Naive thymus-derived CD4-positive, alpha-beta T cell (primary cell): ENCODE measurements at regions of chr4 and their contacts with region 1.

Region 1: DNA sequence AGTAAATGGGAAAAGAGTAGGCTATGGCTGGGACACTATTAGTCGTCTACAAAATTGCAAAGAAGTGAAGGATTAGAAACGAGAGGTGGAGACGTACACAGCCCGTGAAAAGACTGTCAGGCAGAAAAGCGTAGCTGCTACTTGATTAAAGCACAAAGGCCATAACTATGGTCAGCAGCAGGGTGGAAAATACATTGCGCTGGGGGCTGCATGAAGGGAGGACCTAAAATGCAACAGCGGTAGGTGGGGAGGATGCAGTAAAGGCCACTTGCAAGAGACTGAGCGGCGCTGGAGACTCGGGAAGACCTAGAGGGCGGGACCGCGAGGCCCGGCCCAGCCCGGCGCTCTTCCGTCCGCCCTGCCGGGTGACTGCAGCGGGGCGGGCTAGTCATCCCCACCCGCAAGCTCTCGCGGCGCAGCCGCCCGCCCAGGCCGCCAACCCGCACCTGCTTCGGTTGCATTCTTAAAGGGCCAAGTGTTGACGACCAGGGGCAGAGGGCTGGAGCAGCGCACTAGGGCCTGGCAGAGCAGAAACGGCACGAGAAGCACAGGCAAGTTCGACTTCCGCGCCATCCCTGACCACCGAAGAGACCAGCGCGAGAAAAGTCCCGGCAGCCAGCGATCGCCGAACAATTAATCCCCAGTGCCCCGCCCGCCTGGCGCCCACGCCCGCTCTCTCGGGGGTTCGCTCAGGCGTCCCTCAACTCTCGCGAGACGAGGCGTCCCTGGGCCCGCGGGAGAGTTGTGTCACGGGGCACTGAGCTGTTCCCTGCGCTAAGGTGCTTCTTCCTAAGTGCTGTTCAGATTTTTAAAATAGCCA is at the start of gene AGA:
- DNase-seq: peak; percentile 92 to 96 (median 95)
- ATAC-seq: peak; percentile 95
- H3K4me3 ChIP-seq: peak within 1 kb of the TSS; percentile 91
- H3K4me3 Mint-ChIP-seq: peak within 1 kb of the TSS; percentile 85 to 96 (median 91)
- H3K27ac ChIP-seq: peak within 1 kb of the TSS; percentile 83
- H3K27ac Mint-ChIP-seq: peak within 1 kb of the TSS; percentile 90 to 100 (median 94)
- H3K4me1 ChIP-seq: peaks cover 12 to 13% of the 10 kb centered on the region in 2 donors
- H3K4me1 Mint-ChIP-seq: peaks cover 17 to 44% (median 33%) of the 10 kb centered on the region in 7 donors
- H3K27me3 ChIP-seq: no peaks in the 10 kb centered on the region
- H3K27me3 Mint-ChIP-seq: no peaks in the 10 kb centered on the region
- total RNA-seq, gene AGA: 20.4 to 28.4 (median 24.0) TPM

Region 2: GRCh38 chr4:176319704-176320339 is 1122.2 kb before region 1 on chr4 and contains the start of gene SPCS3:
- CTCF ChIA-PET with region 1: no interaction called
- POLR2A ChIA-PET with region 1: no interaction called
- intact Hi-C with region 1: loop called (anchors 1 kb)
- DNase-seq: peak; percentile 92 to 95 (median 95)
- ATAC-seq: peak; percentile 95
- H3K4me3 ChIP-seq: peak within 1 kb of the TSS; percentile 85
- H3K4me3 Mint-ChIP-seq: peak within 1 kb of the TSS; percentile 83 to 97 (median 92)
- H3K27ac ChIP-seq: peak within 1 kb of the TSS; percentile 91
- H3K27ac Mint-ChIP-seq: peak within 1 kb of the TSS; percentile 91 to 97 (median 92)
- H3K4me1 ChIP-seq: peaks cover 32 to 35% of the 10 kb centered on the region in 2 donors
- H3K4me1 Mint-ChIP-seq: peaks cover 32 to 62% (median 47%) of the 10 kb centered on the region in 7 donors
- H3K27me3 ChIP-seq: no peaks in the 10 kb centered on the region
- H3K27me3 Mint-ChIP-seq: peaks cover 0 to 4% (median 0%) of the 10 kb centered on the region in 5 donors
- total RNA-seq, gene SPCS3: 117 to 215 (median 153) TPM

Region 3: GRCh38 chr4:177250056-177250696 is 191.8 kb before region 1 on chr4:
- CTCF ChIA-PET with region 1: no interaction called
- POLR2A ChIA-PET with region 1: no interaction called
- intact Hi-C with region 1: loop called (anchors 1 kb)
- DNase-seq: peak; percentile 12 to 70 (median 53)
- ATAC-seq: peak; percentile 94
- H3K4me3 ChIP-seq: no peak overlapping the region
- H3K4me3 Mint-ChIP-seq: peak overlapping the region in 4 of 10 donors; percentile 18 to 64 (median 30)
- H3K27ac ChIP-seq: no peak overlapping the region
- H3K27ac Mint-ChIP-seq: peak overlapping the region in 2 of 9 donors; percentile 60 to 71
- H3K4me1 ChIP-seq: no peaks in the 10 kb centered on the region
- H3K4me1 Mint-ChIP-seq: peaks cover 7 to 15% (median 12%) of the 10 kb centered on the region in 7 donors
- H3K27me3 ChIP-seq: no peaks in the 10 kb centered on the region
- H3K27me3 Mint-ChIP-seq: peaks cover 11 to 20% (median 14%) of the 10 kb centered on the region in 5 donors

Region 4: GRCh38 chr4:177367336-177367735 is 74.7 kb before region 1 on chr4:
- CTCF ChIA-PET with region 1: interaction called, 5 read pairs
- POLR2A ChIA-PET with region 1: no interaction called
- intact Hi-C with region 1: loop called (anchors 1 kb)
- DNase-seq: peak in 4 of 9 donors; percentile 18 to 45 (median 30)
- ATAC-seq: peak; percentile 37
- H3K4me3 ChIP-seq: no peak overlapping the region
- H3K4me3 Mint-ChIP-seq: no peak overlapping the region
- H3K27ac ChIP-seq: no peak overlapping the region
- H3K27ac Mint-ChIP-seq: peak overlapping the region in 1 of 9 donors; percentile 3
- H3K4me1 ChIP-seq: no peaks in the 10 kb centered on the region
- H3K4me1 Mint-ChIP-seq: peaks cover 0 to 17% (median 0%) of the 10 kb centered on the region in 7 donors
- H3K27me3 ChIP-seq: no peaks in the 10 kb centered on the region
- H3K27me3 Mint-ChIP-seq: peaks cover 0 to 3% (median 0%) of the 10 kb centered on the region in 5 donors

Region 5: GRCh38 chr4:177401658-177402273 is 40.2 kb before region 1 on chr4:
- CTCF ChIA-PET with region 1: no interaction called
- POLR2A ChIA-PET with region 1: interaction called, 18 read pairs
- intact Hi-C with region 1: loop called in 1 of 2 experiments (anchors 1 kb)
- DNase-seq: peak in 5 of 9 donors; percentile 14 to 35 (median 27)
- ATAC-seq: peak; percentile 38
- H3K4me3 ChIP-seq: peak overlapping the region; percentile 14
- H3K4me3 Mint-ChIP-seq: peak overlapping the region; percentile 2 to 74 (median 46)
- H3K27ac ChIP-seq: no peak overlapping the region
- H3K27ac Mint-ChIP-seq: peak overlapping the region; percentile 13 to 89 (median 82)
- H3K4me1 ChIP-seq: peaks cover 14 to 25% of the 10 kb centered on the region in 2 donors
- H3K4me1 Mint-ChIP-seq: peaks cover 24 to 47% (median 35%) of the 10 kb centered on the region in 7 donors
- H3K27me3 ChIP-seq: no peaks in the 10 kb centered on the region
- H3K27me3 Mint-ChIP-seq: peaks cover 0 to 13% (median 0%) of the 10 kb centered on the region in 5 donors

Region 6: DNA sequence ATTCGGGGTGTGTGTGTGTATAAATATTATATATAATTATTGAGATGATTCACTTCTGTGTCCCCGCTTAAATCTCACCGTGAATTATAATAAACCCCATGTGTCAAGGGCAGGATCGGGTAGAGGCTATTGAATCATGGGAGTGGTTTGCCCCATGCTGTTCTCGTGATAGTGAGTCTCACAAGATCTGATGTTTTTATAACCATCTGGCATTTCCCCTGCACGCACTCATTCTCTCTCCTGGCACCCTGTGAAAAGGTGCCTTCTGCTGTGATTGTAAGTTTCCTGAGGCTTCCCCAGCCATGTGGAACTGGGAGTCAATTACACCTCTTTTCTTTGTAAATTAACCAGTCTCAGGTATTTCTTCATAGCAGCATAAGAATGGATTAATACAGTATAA is 851.6 kb after region 1 on chr4:
- CTCF ChIA-PET with region 1: no interaction called
- POLR2A ChIA-PET with region 1: no interaction called
- intact Hi-C with region 1: no loop called
- DNase-seq: no peak
- ATAC-seq: no peak
- H3K4me3 ChIP-seq: no peak overlapping the region
- H3K4me3 Mint-ChIP-seq: no peak overlapping the region
- H3K27ac ChIP-seq: no peak overlapping the region
- H3K27ac Mint-ChIP-seq: no peak overlapping the region
- H3K4me1 ChIP-seq: no peaks in the 10 kb centered on the region
- H3K4me1 Mint-ChIP-seq: peaks cover 0 to 1% (median 0%) of the 10 kb centered on the region in 7 donors
- H3K27me3 ChIP-seq: no peaks in the 10 kb centered on the region
- H3K27me3 Mint-ChIP-seq: no peaks in the 10 kb centered on the region